ENCODE measurements at regions of chr5 and their contacts with region 1.

Region 1: DNA sequence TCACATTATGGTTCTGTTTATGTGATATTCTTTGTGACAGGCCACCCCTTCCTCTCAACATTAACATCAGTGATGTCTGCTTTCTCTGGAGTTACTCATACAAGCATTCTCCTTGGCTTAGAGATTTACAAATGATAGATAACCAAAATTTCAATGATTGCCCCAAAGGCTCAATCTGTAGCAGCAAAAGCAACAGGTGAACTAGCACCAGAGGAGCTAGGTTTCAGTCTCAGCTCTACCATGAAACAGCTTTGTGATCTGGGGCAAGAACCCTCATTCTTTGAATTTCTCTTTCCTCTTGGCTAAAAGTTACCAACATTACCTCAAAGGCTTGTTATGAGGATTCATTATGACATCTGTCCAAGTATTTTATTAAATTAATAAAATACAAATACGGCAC is 120.5 kb downstream of the PPP2R2B start:
- DNase-seq: no peak
- H3K4me3 Mint-ChIP-seq: no peak overlapping the region
- H3K27ac Mint-ChIP-seq: no peak overlapping the region
- H3K4me1 Mint-ChIP-seq: peaks cover 7% of the 10 kb centered on the region
- H3K27me3 Mint-ChIP-seq: peaks cover 13% of the 10 kb centered on the region
- CTCF ChIP-seq: no peak

Region 2: GRCh38 chr5:146620669-146621051 is 137.4 kb before region 1 on chr5:
- CTCF ChIA-PET with region 1: no interaction called
- intact Hi-C with region 1: no loop called
- DNase-seq: no peak
- H3K4me3 Mint-ChIP-seq: no peak overlapping the region
- H3K27ac Mint-ChIP-seq: no peak overlapping the region
- H3K4me1 Mint-ChIP-seq: no peaks in the 10 kb centered on the region
- H3K27me3 Mint-ChIP-seq: peaks cover 36% of the 10 kb centered on the region
- CTCF ChIP-seq: no peak

Region 3: GRCh38 chr5:146718609-146719008 is 39.5 kb before region 1 on chr5:
- CTCF ChIA-PET with region 1: no interaction called
- intact Hi-C with region 1: no loop called
- DNase-seq: no peak
- H3K4me3 Mint-ChIP-seq: no peak overlapping the region
- H3K27ac Mint-ChIP-seq: no peak overlapping the region
- H3K4me1 Mint-ChIP-seq: peaks cover 8% of the 10 kb centered on the region
- H3K27me3 Mint-ChIP-seq: no peaks in the 10 kb centered on the region
- CTCF ChIP-seq: no peak

Region 4: GRCh38 chr5:146828385-146828784 is 70.3 kb after region 1 on chr5:
- CTCF ChIA-PET with region 1: interaction called, 10 read pairs
- intact Hi-C with region 1: no loop called
- DNase-seq: no peak
- H3K4me3 Mint-ChIP-seq: no peak overlapping the region
- H3K27ac Mint-ChIP-seq: no peak overlapping the region
- H3K4me1 Mint-ChIP-seq: no peaks in the 10 kb centered on the region
- H3K27me3 Mint-ChIP-seq: peaks cover 18% of the 10 kb centered on the region
- CTCF ChIP-seq: no peak

Measured in Calu3 (cell line).